ENCODE measurements at regions of chr14 and their contacts with region 1.

Region 1: DNA sequence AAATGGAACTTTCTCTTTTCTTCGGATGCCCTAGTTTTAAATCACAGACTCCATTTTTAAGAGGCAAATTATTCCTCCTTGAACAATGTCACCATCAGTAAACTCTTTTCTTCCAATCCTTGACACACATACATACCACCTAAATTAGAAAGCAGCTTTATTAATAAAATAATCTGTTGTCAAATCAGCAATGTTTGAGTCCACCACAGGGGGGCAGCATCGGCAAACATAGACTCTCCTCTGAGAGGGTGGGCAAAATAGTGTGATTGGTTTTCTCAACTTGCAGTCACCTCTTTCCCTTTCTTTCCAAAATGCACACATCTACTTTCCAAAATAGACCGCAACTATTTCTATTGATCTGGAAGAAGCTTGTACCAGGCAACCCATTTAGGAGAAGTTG is 438.4 kb upstream of the OR4E1 start:
- DNase-seq: peak; percentile 25
- H3K4me3 ChIP-seq: no peak overlapping the region
- H3K27ac ChIP-seq: no peak overlapping the region
- H3K4me1 ChIP-seq: no peaks in the 10 kb centered on the region
- H3K27me3 ChIP-seq: peaks cover 5 to 19% of the 10 kb centered on the region in 2 experiments
- CTCF ChIP-seq: peak; percentile 48 to 64
- POLR2A ChIP-seq: no peak

Region 2: DNA sequence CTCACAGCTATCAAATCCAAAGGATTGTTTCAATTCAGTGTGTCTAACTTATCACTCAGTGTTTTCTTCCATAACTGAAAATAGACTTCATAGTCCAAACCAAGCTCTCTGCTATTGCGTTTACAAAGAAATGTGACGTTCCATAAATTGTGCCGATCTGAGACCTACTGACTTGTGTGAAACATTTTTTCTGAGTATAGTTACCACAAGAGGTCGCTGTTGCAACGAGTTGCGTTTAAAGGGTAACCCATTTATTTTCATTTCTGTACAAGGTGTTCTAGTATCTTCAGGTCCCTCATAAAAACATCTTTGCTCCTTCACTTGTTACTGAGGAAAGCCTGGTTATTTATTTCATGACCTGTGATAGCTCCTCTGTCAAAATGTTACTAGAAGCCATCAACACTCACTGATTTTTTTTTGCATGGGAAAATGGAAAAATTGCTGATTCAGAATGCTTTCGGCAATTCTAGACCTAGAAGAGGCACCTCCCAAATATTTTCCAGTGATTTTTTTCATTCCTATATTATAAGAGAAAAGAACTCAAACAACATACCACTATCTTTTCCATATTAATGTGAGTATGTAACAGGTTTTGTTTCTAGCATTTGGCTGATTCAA is 377.4 kb before region 1 on chr14:
- CTCF ChIA-PET with region 1: no interaction called
- POLR2A ChIA-PET with region 1: no interaction called
- dilution Hi-C with region 1: no loop called
- intact Hi-C with region 1: no loop called
- DNase-seq: peak; percentile 56
- H3K4me3 ChIP-seq: no peak overlapping the region
- H3K27ac ChIP-seq: no peak overlapping the region
- H3K4me1 ChIP-seq: no peaks in the 10 kb centered on the region
- H3K27me3 ChIP-seq: peaks cover 8 to 12% of the 10 kb centered on the region in 2 experiments
- CTCF ChIP-seq: peak; percentile 46 to 64
- POLR2A ChIP-seq: no peak

Region 3: DNA sequence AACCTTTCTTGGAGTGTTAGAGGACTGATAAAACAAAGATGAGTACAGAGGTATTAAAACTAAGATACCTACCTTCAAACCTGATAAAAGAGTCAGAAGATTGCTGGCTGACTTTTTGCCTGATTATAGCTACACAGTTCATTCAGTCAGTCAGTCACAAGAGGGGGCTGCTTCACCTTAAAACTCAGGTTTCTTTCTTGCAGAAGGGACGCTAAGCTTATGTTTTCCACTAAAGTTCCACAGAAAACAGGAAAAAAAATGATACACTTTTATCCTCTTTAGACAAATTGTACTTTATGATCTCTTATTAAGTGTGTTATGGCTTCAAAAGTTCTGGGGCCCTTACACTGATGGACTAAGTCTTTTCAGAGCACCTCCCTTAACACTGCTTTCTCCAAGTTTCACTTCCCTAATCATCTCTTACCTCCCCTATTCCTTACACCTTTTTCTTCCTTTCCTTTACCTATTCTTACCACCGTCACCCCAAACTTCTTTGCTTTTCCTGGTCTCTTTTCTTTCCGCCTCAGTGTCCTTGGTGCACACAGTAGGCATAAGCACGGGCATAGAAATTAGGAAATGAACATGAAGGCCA is 10.3 kb after region 1 on chr14:
- CTCF ChIA-PET with region 1: interaction called, 27 read pairs
- POLR2A ChIA-PET with region 1: no interaction called
- dilution Hi-C with region 1: no loop called
- intact Hi-C with region 1: no loop called
- DNase-seq: no peak
- H3K4me3 ChIP-seq: no peak overlapping the region
- H3K27ac ChIP-seq: no peak overlapping the region
- H3K4me1 ChIP-seq: no peaks in the 10 kb centered on the region
- H3K27me3 ChIP-seq: peaks cover 6 to 43% of the 10 kb centered on the region in 2 experiments
- CTCF ChIP-seq: no peak
- POLR2A ChIP-seq: no peak